GM18951 (cell line): ENCODE measurements at regions of chr15 and their contacts with region 1.

Region 1: DNA sequence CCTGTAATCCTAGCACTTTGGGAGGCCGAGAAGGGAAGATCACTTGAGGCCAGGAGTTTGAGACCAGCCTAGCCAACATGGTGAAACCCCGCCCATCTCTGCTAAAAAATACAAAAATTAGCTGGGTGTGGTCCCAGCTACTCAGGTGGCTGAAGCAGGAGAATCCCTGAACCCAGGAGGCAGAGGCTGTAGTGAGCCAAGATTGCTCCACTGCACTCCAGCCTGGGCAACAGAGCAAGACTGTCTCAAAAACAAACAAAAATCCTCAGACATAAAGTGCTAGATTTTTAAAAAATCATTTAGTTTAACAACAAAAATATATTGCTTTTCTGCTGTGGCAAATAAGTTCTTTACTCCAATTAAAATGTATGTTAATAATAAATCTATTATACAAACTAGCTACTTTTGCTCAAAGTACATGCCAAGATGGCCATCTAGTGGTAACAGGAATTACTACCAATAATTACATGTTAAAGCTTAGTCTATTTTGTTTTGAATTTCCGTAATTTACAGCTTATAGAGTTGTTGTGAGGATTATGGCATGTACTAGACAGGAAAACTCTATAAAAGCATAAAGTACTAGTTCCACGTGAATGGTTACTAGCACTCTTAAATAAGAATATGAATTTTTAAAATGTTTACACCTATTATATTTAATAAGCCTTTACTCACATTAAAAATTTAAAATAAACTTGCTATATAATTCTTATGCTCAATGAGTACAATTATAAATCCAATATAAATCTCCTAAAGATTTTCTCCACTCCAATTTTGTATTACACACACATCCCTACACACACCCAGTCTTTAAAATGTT is 39.0 kb downstream of the GABPB1 start:
- POLR2A ChIP-seq: no peak

Region 2: DNA sequence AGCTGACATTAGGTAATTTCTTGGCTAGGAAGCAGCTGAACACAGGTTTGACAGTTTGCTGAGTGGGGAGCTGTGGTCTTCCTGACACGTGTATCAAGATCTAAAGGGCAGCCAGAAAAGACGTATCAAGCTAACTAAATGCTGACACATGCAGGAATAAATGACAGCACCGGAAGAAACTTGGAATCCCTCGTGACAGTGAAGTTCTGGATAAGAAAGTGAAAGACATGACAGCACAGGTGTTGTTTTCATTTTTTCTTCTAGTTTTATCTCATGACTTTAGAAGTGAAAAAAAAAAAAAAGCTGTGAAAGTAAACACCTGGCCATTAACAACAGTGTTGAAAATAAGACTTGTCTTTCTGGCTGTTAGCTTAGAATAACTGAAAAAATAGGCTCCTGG is 844.3 kb before region 1 on chr15:
- in situ Hi-C with region 1: loop called (anchors 25 kb)
- POLR2A ChIP-seq: no peak

Region 3: DNA sequence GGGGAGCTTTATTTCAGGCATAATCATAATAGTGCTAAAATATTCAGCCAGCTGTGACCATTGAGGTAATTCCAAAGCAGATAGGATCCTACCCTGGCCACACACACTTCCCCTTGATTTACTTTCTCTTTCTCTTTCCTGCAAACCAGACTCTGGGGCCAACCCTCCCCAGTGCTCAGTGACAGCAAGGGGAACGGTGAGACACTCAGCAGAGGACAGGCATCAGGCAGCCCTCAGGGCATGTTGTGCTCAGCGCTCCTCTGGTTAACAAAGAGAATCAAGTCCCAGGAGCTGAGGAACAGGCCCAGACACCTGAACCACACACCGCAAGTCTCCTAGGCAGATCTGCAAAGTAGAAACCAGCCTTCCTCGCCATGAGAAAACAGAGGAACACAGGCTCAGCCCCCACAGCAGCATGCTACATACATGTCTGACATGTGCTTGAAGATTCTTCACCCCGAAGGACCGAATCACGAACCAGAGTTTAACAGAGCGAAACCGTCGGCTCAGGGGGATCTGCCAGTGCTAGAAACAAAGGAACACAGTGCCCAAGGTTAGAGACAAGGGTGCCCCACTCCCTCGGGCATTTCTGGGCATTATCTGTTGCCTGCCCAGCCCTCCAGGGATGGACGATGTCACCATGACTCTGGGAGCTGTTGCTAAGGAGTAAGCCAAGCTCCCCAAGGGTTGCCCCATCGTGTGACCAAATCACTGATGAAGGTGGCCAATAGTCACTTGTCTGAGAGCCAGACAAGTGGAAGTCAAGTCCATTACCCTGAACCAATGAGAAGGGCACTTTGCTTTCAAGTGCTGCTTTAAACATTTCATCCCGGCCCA is 68.0 kb before region 1 on chr15:
- in situ Hi-C with region 1: no loop called
- POLR2A ChIP-seq: peak; percentile 48